Heart right ventricle (tissue), 16 donors: ENCODE measurements at regions of chr17 and their contacts with region 1.

Region 1: GRCh38 chr17:58447039-58447975 is 30.0 kb upstream of the RNF43 start:
- DNase-seq: peak; percentile 35 to 57
- ATAC-seq: peak; percentile 70 to 89 (median 80)
- H3K4me3 ChIP-seq: no peak overlapping the region
- H3K27ac ChIP-seq: no peak overlapping the region
- H3K4me1 ChIP-seq: no peaks in the 10 kb centered on the region
- H3K27me3 ChIP-seq: peaks cover 0 to 9% (median 0%) of the 10 kb centered on the region in 7 donors
- CTCF ChIP-seq: peak; percentile 11 to 81 (median 64)

Region 2: DNA sequence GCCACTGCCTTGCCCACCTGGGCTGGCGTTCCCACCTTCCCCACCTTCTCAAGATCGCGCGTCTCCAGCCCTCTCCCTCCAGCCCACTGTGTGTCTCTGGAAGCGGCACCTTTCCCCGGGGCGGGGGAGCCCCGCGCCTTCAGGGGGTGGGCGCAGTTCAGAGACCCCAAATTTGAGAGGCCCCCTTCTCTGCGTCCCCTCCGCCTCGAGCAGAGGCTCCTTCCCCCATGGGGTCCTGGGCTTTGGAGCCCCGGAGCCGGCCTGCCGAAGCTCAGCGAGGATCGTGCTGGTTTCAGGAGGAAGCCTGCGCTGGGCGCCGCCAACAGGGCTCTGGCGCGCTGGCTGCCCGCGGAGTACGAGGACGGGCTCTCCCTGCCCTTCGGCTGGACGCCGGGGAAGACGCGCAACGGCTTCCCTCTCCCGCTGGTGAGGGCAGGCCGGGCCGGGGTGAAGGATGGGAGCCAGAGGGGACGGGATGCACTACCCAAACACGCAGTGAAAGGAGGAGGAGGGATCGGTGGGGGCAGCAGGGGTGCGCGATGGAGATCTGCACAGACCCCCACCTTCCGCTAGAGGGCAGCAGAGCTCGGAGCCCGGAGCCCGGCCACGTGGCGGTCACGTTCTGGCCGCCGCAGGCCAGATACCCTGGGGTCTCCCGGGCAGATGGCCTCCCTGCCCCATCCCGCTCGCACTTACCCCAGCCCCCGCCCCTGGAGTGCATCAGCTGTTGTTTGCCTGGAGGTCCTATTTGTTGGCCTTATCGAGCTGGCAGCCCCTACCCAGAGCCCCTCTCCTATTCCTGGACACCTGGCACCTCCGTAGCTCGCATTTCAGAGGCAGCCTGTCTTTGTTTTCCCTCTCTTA is 197.8 kb before region 1 on chr17:
- intact Hi-C with region 1: loop called in 2 of 10 experiments (anchors 5 to 10 kb)
- DNase-seq: peak; percentile 51 to 72
- ATAC-seq: peak; percentile 89 to 93 (median 91)
- H3K4me3 ChIP-seq: peak overlapping the region; percentile 26 to 56 (median 44)
- H3K27ac ChIP-seq: no peak overlapping the region
- H3K4me1 ChIP-seq: peaks cover 0 to 11% (median 8%) of the 10 kb centered on the region in 9 donors
- H3K27me3 ChIP-seq: peaks cover 0 to 83% (median 62%) of the 10 kb centered on the region in 7 donors
- CTCF ChIP-seq: peak; percentile 89 to 98 (median 96)

Region 3: GRCh38 chr17:58303971-58304725 is 143.2 kb before region 1 on chr17:
- intact Hi-C with region 1: loop called in 2 of 10 experiments (anchors 10 kb)
- DNase-seq: no peak
- ATAC-seq: peak in 6 of 8 donors; percentile 43 to 64 (median 58)
- H3K4me3 ChIP-seq: no peak overlapping the region
- H3K27ac ChIP-seq: no peak overlapping the region
- H3K4me1 ChIP-seq: peaks cover 0 to 4% (median 0%) of the 10 kb centered on the region in 9 donors
- H3K27me3 ChIP-seq: peaks cover 0 to 29% (median 0%) of the 10 kb centered on the region in 7 donors
- CTCF ChIP-seq: peak; percentile 33 to 82 (median 60)

Region 4: DNA sequence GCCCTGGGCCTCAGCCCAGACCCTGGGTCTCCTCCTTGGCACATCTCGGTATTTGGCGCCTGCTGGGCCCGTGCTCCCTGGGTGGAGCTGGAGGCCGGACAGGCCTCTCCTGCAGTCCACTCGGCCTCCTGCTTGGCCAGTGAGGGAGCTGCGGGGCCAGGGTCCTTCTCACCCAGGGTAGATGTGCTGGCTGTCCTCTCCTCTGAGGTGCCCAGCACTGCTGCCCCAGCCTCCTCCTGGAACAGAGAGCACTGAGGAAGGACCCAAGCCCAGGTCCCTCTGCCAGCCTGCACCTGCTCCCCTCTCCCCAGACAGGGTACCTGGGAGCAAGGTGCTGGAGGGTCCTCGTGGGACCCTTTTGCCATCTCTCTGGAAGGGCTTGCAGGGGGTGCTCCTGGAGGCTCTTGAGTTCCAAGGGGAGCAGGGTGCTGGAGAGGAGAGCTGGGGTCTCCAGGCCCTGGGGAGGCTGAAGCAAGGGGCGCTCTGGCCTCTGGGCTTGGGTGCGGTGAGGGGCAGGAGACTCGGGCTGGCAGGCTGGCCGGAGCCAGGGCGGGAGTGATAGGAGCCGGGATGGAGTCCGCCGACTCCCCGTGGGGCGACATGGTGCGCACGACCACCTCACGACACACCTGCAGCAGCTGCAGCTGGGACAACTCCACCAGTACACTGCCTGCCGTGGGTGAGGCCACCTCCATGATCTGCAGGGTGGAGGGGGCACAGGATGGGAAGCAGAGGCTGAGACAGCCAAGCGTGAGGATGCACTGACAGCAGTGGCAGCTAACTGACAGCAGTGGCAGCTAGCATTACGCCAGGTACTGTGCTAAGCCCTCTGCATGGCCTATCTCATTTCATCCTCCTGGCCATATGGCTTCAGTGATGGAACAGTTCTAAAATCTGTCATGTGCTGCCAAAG is 136.5 kb before region 1 on chr17:
- intact Hi-C with region 1: loop called in 7 of 10 experiments (anchors 5 to 10 kb)
- DNase-seq: no peak
- ATAC-seq: peak in 1 of 8 donors; percentile 7
- H3K4me3 ChIP-seq: no peak overlapping the region
- H3K27ac ChIP-seq: no peak overlapping the region
- H3K4me1 ChIP-seq: no peaks in the 10 kb centered on the region
- H3K27me3 ChIP-seq: no peaks in the 10 kb centered on the region
- CTCF ChIP-seq: no peak

Region 5: GRCh38 chr17:58317421-58318064 is 129.8 kb before region 1 on chr17:
- intact Hi-C with region 1: loop called in 6 of 10 experiments (anchors 1 to 10 kb)
- DNase-seq: no peak
- ATAC-seq: peak in 5 of 8 donors; percentile 40 to 65 (median 45)
- H3K4me3 ChIP-seq: no peak overlapping the region
- H3K27ac ChIP-seq: peak overlapping the region in 1 of 10 donors; percentile 44
- H3K4me1 ChIP-seq: peaks cover 0 to 5% (median 0%) of the 10 kb centered on the region in 9 donors
- H3K27me3 ChIP-seq: peaks cover 0 to 3% (median 0%) of the 10 kb centered on the region in 7 donors
- CTCF ChIP-seq: peak in 7 of 9 donors; percentile 38 to 76 (median 52)

Region 6: GRCh38 chr17:58337600-58338453 is 109.5 kb before region 1 on chr17:
- intact Hi-C with region 1: no loop called
- DNase-seq: peak; percentile 71 to 73
- ATAC-seq: peak; percentile 72 to 86 (median 80)
- H3K4me3 ChIP-seq: peak overlapping the region in 5 of 10 donors; percentile 5 to 82 (median 22)
- H3K27ac ChIP-seq: peak overlapping the region in 8 of 10 donors; percentile 48 to 100 (median 76)
- H3K4me1 ChIP-seq: peaks cover 0 to 88% (median 20%) of the 10 kb centered on the region in 9 donors
- H3K27me3 ChIP-seq: peaks cover 0 to 23% (median 3%) of the 10 kb centered on the region in 7 donors
- CTCF ChIP-seq: no peak

Region 7: DNA sequence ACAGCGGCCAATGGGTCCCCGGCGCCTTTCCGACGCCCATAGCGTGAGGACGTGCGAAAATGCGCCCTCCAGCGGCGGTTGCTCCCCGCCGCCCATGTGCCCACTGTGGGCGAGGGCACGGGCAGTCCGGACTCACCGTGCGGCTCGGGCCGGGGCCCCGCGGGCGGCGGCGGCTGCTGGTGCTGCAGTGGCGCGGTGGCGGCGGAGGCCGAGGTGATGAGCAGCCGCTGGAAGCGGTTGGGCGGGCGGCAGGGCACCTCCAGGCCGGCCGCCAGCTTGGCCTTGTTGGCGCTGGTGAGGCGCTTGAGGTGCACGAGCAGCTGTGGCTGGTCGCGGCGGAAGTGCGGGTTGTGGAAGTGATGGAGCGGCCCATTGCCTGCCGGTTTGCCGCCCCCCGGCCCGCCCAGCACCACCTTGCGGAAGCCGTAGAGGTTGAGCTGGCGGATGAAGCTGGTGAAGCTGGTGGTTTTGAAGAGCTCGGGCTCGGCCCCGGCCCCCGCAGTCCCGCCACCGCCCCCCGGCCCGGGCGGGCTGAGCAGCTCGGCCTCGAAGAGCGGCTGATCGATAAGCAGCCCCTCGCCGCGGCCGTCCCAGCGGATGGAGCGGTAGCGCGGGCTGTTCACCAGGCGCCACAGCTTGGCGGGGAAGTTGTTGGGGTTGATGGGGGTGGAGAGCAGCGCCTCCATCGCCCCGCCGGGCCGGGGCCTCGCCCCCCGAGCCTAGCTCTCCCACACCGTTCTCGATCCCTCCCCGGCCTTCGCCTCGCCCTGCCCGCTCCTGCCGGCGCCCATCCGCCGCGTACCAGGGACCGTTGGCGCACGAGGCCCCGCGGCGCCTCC is 40.5 kb after region 1 on chr17 and contains the start of gene HSF5:
- intact Hi-C with region 1: no loop called
- DNase-seq: peak in 1 of 2 donors; percentile 29
- ATAC-seq: peak in 2 of 8 donors; percentile 57 to 60
- H3K4me3 ChIP-seq: peak within 1 kb of the TSS in 2 of 10 donors; percentile 4 to 45
- H3K27ac ChIP-seq: peak within 1 kb of the TSS in 1 of 10 donors; percentile 34
- H3K4me1 ChIP-seq: peaks cover 0 to 7% (median 0%) of the 10 kb centered on the region in 9 donors
- H3K27me3 ChIP-seq: no peaks in the 10 kb centered on the region
- CTCF ChIP-seq: peak in 3 of 9 donors; percentile 10 to 40 (median 21)
- total RNA-seq, gene HSF5: 0.04 to 0.14 (median 0.05) TPM in 3 of 10 donors, not detected in the others